ENCODE measurements at regions of chr2 and their contacts with region 1.

Region 1: GRCh38 chr2:9423100-9423921 is at the starts of genes CPSF3 and ITGB1BP1:
- DNase-seq: peak; percentile 96
- H3K4me3 ChIP-seq: peak within 1 kb of the TSS; percentile 52 to 98 (median 75)
- H3K27ac ChIP-seq: peak within 1 kb of the TSS; percentile 62
- H3K4me1 ChIP-seq: peaks cover 16% of the 10 kb centered on the region
- H3K27me3 ChIP-seq: no peaks in the 10 kb centered on the region
- CTCF ChIP-seq: no peak
- POLR2A ChIP-seq: peak; percentile 76
- total RNA-seq, gene CPSF3: 35.6 and 37.1 TPM in 2 replicates
- total RNA-seq, gene ITGB1BP1: 95.5 and 170 TPM in 2 replicates

Region 2: GRCh38 chr2:9474361-9474967 is 51.2 kb after region 1 on chr2 and contains the start of gene IAH1:
- CTCF ChIA-PET with region 1: no interaction called
- POLR2A ChIA-PET with region 1: no interaction called
- dilution Hi-C with region 1: no loop called
- intact Hi-C with region 1: loop called (anchors 1 kb)
- DNase-seq: peak; percentile 60
- H3K4me3 ChIP-seq: peak within 1 kb of the TSS; percentile 54 to 86 (median 73)
- H3K27ac ChIP-seq: peak within 1 kb of the TSS; percentile 70
- H3K4me1 ChIP-seq: peaks cover 7% of the 10 kb centered on the region
- H3K27me3 ChIP-seq: no peaks in the 10 kb centered on the region
- CTCF ChIP-seq: no peak
- POLR2A ChIP-seq: peak; percentile 66
- total RNA-seq, gene IAH1: 39.9 and 44.0 TPM in 2 replicates

Region 3: DNA sequence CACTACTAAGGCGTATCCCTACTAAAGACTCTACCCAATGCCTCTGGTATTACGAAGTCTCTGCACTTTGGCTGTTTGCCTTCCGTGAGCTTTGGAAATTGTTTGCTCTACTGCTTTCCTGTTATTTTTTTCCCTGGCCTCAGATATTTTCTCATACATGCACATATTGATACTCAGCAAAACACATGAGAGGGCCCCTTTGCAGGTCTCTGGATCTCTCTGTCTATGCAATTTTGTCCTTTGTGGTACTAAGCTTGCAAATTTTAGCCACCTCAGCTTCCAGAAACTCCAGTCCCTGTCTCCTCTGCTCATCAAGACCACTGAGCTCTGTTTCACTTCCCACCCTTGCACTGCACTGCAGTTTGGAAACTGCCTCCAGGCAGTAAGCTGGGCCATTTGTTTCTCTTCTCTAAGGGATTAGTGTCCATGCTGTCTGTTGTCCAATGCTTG is 466.5 kb after region 1 on chr2:
- CTCF ChIA-PET with region 1: no interaction called
- POLR2A ChIA-PET with region 1: no interaction called
- dilution Hi-C with region 1: no loop called
- intact Hi-C with region 1: no loop called
- DNase-seq: peak; percentile 24
- H3K4me3 ChIP-seq: no peak overlapping the region
- H3K27ac ChIP-seq: no peak overlapping the region
- H3K4me1 ChIP-seq: no peaks in the 10 kb centered on the region
- H3K27me3 ChIP-seq: no peaks in the 10 kb centered on the region
- CTCF ChIP-seq: no peak
- POLR2A ChIP-seq: no peak

Measured in endothelial cell of umbilical vein (primary cell).